CD4-positive, alpha-beta memory T cell (primary cell): ENCODE measurements at regions of chr19 and their contacts with region 1.

Region 1: GRCh38 chr19:44304659-44305193 is at the start of gene ZNF235:
- DNase-seq: peak; percentile 62 to 72 (median 66)
- H3K4me3 ChIP-seq: peak within 1 kb of the TSS; percentile 74 to 85
- H3K4me3 Mint-ChIP-seq: peak within 1 kb of the TSS; percentile 89 to 95 (median 93)
- H3K27ac ChIP-seq: peak within 1 kb of the TSS; percentile 48
- H3K27ac Mint-ChIP-seq: peak within 1 kb of the TSS; percentile 35 to 90 (median 77)
- H3K4me1 ChIP-seq: peaks cover 13% of the 10 kb centered on the region
- H3K4me1 Mint-ChIP-seq: peaks cover 8 to 25% (median 15%) of the 10 kb centered on the region in 4 donors
- H3K27me3 ChIP-seq: no peaks in the 10 kb centered on the region
- H3K27me3 Mint-ChIP-seq: peaks cover 2 to 5% of the 10 kb centered on the region in 2 donors
- total RNA-seq, gene ZNF235: 13.0 to 15.9 TPM

Region 2: DNA sequence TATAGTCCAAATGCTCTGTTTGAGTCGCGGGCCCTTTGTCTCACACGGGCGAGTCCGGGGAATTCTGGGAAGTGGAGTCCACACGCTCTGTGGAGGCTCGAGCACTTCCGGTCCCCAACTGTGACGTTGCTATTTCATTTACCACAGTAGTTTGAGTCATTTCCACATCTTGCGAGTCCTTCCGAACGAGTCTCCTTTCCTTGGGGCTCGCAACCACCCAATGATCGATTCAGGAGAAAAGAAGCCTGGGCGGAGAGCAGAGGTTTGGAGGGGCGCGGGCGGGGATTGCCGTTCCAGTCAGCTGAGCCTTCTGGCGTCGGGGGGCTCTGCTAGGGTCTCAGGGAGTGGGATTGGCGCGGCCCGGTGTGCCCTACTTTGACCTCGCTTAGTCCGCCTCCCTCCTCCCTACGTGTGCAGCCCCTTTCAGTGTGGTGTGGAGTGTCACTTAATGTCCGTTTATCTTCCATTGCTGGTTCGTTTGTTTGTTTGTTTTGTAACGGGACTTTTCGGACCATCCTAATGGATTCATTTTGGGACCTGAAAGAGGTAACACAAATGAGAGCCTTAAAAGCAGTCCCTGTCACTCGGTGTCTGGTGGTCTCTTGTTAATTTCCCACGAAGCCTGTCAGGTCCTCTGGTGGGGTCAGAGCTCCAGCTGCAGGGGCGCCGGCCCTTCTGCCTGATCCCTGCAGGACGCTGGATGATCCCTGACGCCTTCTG is 279.3 kb before region 1 on chr19 and contains the start of gene ZNF222:
- CTCF ChIA-PET with region 1: no interaction called
- POLR2A ChIA-PET with region 1: no interaction called
- intact Hi-C with region 1: loop called (anchors 10 kb)
- DNase-seq: peak; percentile 66 to 84 (median 75)
- H3K4me3 ChIP-seq: peak within 1 kb of the TSS; percentile 55 to 61
- H3K4me3 Mint-ChIP-seq: peak within 1 kb of the TSS; percentile 90 to 100 (median 98)
- H3K27ac ChIP-seq: peak within 1 kb of the TSS; percentile 40
- H3K27ac Mint-ChIP-seq: peak within 1 kb of the TSS; percentile 48 to 96 (median 95)
- H3K4me1 ChIP-seq: peaks cover 15% of the 10 kb centered on the region
- H3K4me1 Mint-ChIP-seq: peaks cover 17 to 31% (median 22%) of the 10 kb centered on the region in 4 donors
- H3K27me3 ChIP-seq: no peaks in the 10 kb centered on the region
- H3K27me3 Mint-ChIP-seq: peaks cover 2 to 10% of the 10 kb centered on the region in 2 donors
- total RNA-seq, gene ZNF222: 7.9 to 11.4 TPM

Region 3: GRCh38 chr19:44071824-44072542 is 232.7 kb before region 1 on chr19 and contains the start of gene ZNF284:
- CTCF ChIA-PET with region 1: no interaction called
- POLR2A ChIA-PET with region 1: no interaction called
- intact Hi-C with region 1: no loop called
- DNase-seq: peak; percentile 82 to 85 (median 83)
- H3K4me3 ChIP-seq: peak within 1 kb of the TSS; percentile 54 to 76
- H3K4me3 Mint-ChIP-seq: peak within 1 kb of the TSS; percentile 85 to 96 (median 92)
- H3K27ac ChIP-seq: peak within 1 kb of the TSS; percentile 39
- H3K27ac Mint-ChIP-seq: peak within 1 kb of the TSS; percentile 45 to 93 (median 86)
- H3K4me1 ChIP-seq: peaks cover 21% of the 10 kb centered on the region
- H3K4me1 Mint-ChIP-seq: peaks cover 17 to 31% (median 24%) of the 10 kb centered on the region in 4 donors
- H3K27me3 ChIP-seq: no peaks in the 10 kb centered on the region
- H3K27me3 Mint-ChIP-seq: peaks cover 0 to 1% of the 10 kb centered on the region in 2 donors
- total RNA-seq, gene ZNF284: 5.4 to 5.7 TPM

Region 4: DNA sequence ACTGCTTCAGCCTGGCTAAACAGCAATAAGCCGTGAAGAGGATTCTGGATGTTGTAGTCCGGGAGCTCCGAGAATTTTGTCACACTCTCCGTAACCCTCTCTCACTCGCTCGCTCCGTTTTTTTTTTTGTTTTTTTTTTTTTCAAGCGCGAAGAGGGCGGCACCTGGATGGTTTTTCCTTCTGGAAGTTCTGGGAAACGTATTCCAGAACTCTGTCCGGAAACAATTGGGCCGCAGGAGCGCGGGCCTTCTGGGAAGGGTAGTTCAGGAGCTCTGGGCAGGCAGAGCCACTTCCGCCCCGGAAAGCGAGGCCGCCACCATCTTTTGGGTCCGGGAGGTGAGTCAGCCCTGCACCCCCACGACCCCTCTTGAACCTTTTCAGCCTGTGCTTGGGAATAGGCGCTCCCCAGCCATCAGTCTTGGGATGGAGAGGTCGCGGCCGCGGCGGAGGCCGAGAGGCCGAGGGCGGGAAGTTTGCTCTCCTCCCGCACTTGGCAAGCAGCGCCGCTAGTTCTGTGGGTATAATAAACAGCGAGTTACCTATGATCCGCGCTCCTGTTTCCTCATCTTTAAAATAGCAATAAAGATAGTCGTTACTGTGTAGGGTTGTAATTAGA is 92.4 kb before region 1 on chr19 and contains the start of gene ZNF227:
- CTCF ChIA-PET with region 1: no interaction called
- POLR2A ChIA-PET with region 1: interaction called, 13 read pairs
- intact Hi-C with region 1: loop called (anchors 2 kb)
- DNase-seq: peak; percentile 73 to 86 (median 79)
- H3K4me3 ChIP-seq: peak within 1 kb of the TSS; percentile 52 to 93
- H3K4me3 Mint-ChIP-seq: peak within 1 kb of the TSS; percentile 96 to 99 (median 98)
- H3K27ac ChIP-seq: peak within 1 kb of the TSS; percentile 78
- H3K27ac Mint-ChIP-seq: peak within 1 kb of the TSS; percentile 85 to 99 (median 97)
- H3K4me1 ChIP-seq: peaks cover 17% of the 10 kb centered on the region
- H3K4me1 Mint-ChIP-seq: peaks cover 20 to 34% (median 23%) of the 10 kb centered on the region in 4 donors
- H3K27me3 ChIP-seq: no peaks in the 10 kb centered on the region
- H3K27me3 Mint-ChIP-seq: no peaks in the 10 kb centered on the region
- total RNA-seq, gene ZNF227: 51.6 to 54.4 TPM